OCI-LY7 (cell line): ENCODE measurements at regions of chr12 and their contacts with region 1.

Region 1: DNA sequence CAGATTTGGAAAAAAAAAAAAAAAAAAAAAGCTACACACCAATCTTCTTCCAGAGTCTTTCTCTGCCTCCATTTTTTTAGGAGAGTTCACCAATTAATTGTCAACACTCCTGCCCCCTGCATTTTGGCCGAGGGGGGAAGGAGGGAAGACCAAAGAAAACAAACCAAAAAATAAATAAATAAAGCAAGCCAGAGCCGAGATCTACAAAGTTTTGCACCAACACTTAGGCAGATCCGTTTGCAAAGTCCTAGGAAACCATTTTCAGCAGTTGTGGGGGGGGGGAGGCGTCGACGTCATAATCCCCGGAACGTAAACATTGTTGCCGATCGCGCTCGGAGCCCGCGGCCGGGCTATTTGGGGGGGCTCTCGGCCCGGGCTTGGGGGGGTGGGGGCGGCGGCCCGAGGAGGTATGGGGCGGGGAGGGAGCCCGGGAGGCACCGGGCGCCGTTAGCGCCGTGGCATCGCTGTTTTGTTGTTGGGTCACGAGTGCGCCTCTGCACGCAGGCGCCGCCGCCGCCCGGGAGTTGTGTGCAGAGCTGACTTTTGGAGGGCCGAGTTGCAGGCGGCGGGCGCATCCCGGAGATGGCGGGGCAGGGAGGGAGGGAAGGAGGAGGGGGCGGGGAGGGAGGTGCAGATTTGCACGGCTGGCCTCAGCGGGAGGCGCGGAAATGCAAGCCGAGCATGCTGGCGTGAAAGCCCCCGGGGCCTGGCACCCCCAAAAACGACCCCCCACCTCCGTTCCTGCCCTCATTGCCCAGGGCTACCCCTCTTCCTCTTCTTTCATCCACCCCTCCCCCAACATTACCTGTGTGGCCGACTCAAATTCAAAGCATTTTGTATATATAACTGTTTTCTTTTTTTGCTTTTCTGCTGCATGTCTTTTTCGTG is 598 bp downstream of the KDM2B start:
- DNase-seq: peak; percentile 77
- H3K4me3 ChIP-seq: peak overlapping the region; percentile 79
- H3K27ac ChIP-seq: peak overlapping the region; percentile 78
- H3K4me1 ChIP-seq: peaks cover 29% of the 10 kb centered on the region
- CTCF ChIP-seq: no peak

Region 2: GRCh38 chr12:121300083-121300819 is 280.0 kb before region 1 on chr12:
- CTCF ChIA-PET with region 1: no interaction called
- POLR2A ChIA-PET with region 1: interaction called, 10 read pairs
- intact Hi-C with region 1: no loop called
- DNase-seq: no peak
- H3K4me3 ChIP-seq: no peak overlapping the region
- H3K27ac ChIP-seq: no peak overlapping the region
- H3K4me1 ChIP-seq: peaks cover 29% of the 10 kb centered on the region
- CTCF ChIP-seq: no peak

Region 3: GRCh38 chr12:121849665-121850064 is 269.4 kb after region 1 on chr12:
- CTCF ChIA-PET with region 1: no interaction called
- POLR2A ChIA-PET with region 1: no interaction called
- intact Hi-C with region 1: no loop called
- DNase-seq: no peak
- H3K4me3 ChIP-seq: no peak overlapping the region
- H3K27ac ChIP-seq: no peak overlapping the region
- H3K4me1 ChIP-seq: no peaks in the 10 kb centered on the region
- CTCF ChIP-seq: no peak